ENCODE measurements at regions of chr4 and their contacts with region 1.

Region 1: GRCh38 chr4:26410385-26411293 is 79.6 kb downstream of the CCKAR start:
- DNase-seq: peak; percentile 44
- ATAC-seq: peak; percentile 60; the same call in 2 of the 3 replicates
- H3K4me3 ChIP-seq: no peak overlapping the region
- H3K27ac ChIP-seq: no peak overlapping the region
- H3K4me1 ChIP-seq: 0 out of 2 replicates have a peak, but pooled peaks cover 6% of the 10 kb centered on the region
- H3K27me3 ChIP-seq: no peaks in the 10 kb centered on the region
- CTCF ChIP-seq: peak; percentile 65
- EP300 ChIP-seq: no peak
- POLR2A ChIP-seq: no peak
- RAD21 ChIP-seq: 0 out of 2 replicates have a peak, but pooled peaks have one; percentile 25

Region 2: GRCh38 chr4:25993395-25994185 is 417.0 kb before region 1 on chr4:
- CTCF ChIA-PET with region 1: interaction called, 10 read pairs
- POLR2A ChIA-PET with region 1: no interaction called
- in situ Hi-C with region 1: no loop called
- intact Hi-C with region 1: loop called (anchors 1 kb)
- DNase-seq: peak; percentile 35
- ATAC-seq: peak; percentile 91
- H3K4me3 ChIP-seq: no peak overlapping the region
- H3K27ac ChIP-seq: no peak overlapping the region
- H3K4me1 ChIP-seq: no peaks in the 10 kb centered on the region
- H3K27me3 ChIP-seq: no peaks in the 10 kb centered on the region
- CTCF ChIP-seq: peak; percentile 60
- EP300 ChIP-seq: no peak
- POLR2A ChIP-seq: no peak
- RAD21 ChIP-seq: peak; percentile 37; the same call in 1 of the 2 replicates

Region 3: DNA sequence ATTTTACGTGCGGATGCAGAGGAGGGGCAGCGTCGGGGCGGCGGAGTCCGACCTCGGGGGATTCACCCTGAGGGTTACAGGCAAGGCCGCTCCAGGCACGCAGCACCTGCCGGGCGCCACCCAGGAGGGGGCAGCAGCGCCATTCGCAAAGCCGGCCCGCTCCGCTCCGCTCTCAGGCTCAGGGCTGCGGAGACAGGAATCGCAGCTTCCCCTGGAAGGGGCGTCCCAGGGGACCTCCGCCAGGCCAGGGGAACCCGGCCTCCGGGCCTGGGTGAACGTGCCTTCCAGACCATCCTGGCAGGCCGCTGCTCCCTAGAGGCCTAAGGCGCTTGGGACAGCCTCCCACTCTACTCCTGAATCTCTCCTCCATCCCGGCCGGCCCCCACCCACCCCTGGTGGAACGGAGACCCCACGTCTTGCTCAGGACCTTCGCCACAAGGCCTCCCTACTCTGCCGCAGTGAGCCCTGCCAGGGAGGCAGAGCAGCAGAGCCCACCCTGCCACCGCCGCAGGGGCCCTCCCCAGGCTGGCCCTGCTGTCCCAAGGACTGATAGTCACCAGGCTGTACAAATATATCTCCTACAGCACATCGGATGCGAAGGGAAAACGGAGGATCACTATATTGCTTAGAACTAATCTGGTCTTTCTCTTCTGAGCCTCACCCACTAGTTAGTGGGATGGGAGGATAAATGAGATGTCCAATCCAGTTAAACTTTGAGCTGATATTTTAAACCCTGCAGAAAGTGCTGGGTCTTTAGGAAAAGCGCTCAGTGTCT is 381.7 kb before region 1 on chr4:
- CTCF ChIA-PET with region 1: interaction called, 6 read pairs
- POLR2A ChIA-PET with region 1: no interaction called
- in situ Hi-C with region 1: loop called (anchors 25 kb)
- intact Hi-C with region 1: loop called (anchors 1 kb)
- DNase-seq: peak; percentile 27
- ATAC-seq: peak; percentile 98
- H3K4me3 ChIP-seq: no peak overlapping the region; a peak in 1 of 6 replicates
- H3K27ac ChIP-seq: no peak overlapping the region
- H3K4me1 ChIP-seq: peaks cover 36% of the 10 kb centered on the region
- H3K27me3 ChIP-seq: peaks cover 5 to 50% of the 10 kb centered on the region in 2 experiments
- CTCF ChIP-seq: peak; percentile 94
- EP300 ChIP-seq: no peak
- POLR2A ChIP-seq: no peak
- RAD21 ChIP-seq: peak; percentile 95

Region 4: DNA sequence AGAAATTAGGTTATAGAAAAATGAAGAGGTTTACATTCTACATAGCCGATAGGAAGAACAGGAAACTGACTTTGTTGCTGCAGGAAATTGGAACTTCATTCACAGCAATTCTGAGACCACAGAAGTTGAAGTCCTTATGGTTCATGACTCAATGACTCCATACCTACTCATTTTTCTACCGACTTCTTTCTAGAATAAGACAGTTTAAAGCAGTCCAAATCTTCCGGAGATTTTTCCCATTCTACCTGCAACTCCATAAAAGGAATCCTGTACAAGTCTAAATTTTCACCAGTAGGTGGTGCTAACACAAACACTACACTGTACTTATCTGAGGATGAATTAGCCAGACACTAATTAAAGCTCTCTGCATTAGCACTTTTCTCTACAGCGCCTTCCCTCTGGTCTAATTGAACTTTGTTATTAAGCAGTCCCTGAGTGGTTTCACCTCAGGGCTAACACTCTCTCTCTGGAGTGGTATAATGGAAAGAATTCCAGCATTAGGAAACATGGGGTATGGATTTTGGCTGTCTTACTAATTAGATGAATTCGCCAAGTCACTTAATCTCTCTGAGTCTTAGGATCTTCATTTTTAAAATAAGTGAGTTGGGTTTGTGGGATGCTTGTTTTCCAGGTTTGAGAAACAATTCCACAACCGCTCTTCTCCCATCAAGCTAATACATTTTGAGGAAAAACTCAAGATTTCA is 328.7 kb before region 1 on chr4:
- CTCF ChIA-PET with region 1: interaction called, 11 read pairs
- POLR2A ChIA-PET with region 1: no interaction called
- in situ Hi-C with region 1: no loop called
- intact Hi-C with region 1: loop called (anchors 1 kb)
- DNase-seq: peak; percentile 32
- ATAC-seq: peak; percentile 85
- H3K4me3 ChIP-seq: no peak overlapping the region
- H3K27ac ChIP-seq: no peak overlapping the region
- H3K4me1 ChIP-seq: no peaks in the 10 kb centered on the region
- H3K27me3 ChIP-seq: peaks cover 2 to 6% of the 10 kb centered on the region in 2 experiments; a peak in 1 of 5 replicates
- CTCF ChIP-seq: peak; percentile 68
- EP300 ChIP-seq: no peak
- POLR2A ChIP-seq: no peak
- RAD21 ChIP-seq: 0 out of 2 replicates have a peak, but pooled peaks have one; percentile 24

Region 5: GRCh38 chr4:26325191-26325590 is 85.4 kb before region 1 on chr4:
- CTCF ChIA-PET with region 1: interaction called, 22 read pairs
- POLR2A ChIA-PET with region 1: no interaction called
- in situ Hi-C with region 1: loop called (anchors 5 kb)
- intact Hi-C with region 1: loop called (anchors 1 kb)
- DNase-seq: peak; percentile 42
- ATAC-seq: no peak
- H3K4me3 ChIP-seq: no peak overlapping the region
- H3K27ac ChIP-seq: no peak overlapping the region
- H3K4me1 ChIP-seq: peaks cover 22% of the 10 kb centered on the region
- H3K27me3 ChIP-seq: no peaks in the 10 kb centered on the region; a peak in 1 of 5 replicates
- CTCF ChIP-seq: peak; percentile 46
- EP300 ChIP-seq: no peak
- POLR2A ChIP-seq: no peak
- RAD21 ChIP-seq: no peak

Region 6: DNA sequence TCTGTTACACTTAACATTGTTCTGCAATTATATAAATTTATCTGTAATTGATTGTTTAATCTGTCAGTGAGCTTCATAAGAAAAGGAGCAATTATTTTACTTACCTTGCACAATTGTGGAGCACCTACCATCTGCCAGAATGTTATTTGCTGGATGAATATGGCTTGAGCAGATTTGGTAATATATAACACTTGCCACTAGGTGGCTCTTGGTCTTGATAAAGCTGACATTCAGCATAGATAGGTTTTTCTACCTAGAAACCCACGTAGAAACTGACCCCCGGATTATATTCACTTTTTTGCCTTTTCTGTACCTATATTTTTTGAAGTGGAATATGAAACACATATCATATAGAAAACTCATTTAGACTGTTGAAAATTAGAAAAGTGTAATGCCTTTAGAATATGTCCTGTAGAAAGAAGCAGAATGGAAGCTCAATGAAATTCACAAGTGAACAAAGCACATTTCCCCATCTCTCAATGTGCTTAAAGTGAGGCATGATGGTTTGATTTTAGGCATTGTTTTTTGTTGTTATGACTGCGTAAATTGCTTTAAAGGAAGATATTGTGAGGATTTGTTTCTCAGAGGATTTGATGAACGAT is 80.4 kb before region 1 on chr4:
- CTCF ChIA-PET with region 1: interaction called, 22 read pairs
- POLR2A ChIA-PET with region 1: no interaction called
- in situ Hi-C with region 1: loop called (anchors 5 kb)
- intact Hi-C with region 1: loop called (anchors 1 kb)
- DNase-seq: peak; percentile 64
- ATAC-seq: peak; percentile 91
- H3K4me3 ChIP-seq: no peak overlapping the region
- H3K27ac ChIP-seq: no peak overlapping the region
- H3K4me1 ChIP-seq: peaks cover 22% of the 10 kb centered on the region
- H3K27me3 ChIP-seq: no peaks in the 10 kb centered on the region
- CTCF ChIP-seq: peak; percentile 68
- EP300 ChIP-seq: no peak
- POLR2A ChIP-seq: no peak
- RAD21 ChIP-seq: no peak

Region 7: GRCh38 chr4:26719954-26720552 is 309.4 kb after region 1 on chr4:
- CTCF ChIA-PET with region 1: interaction called, 4 read pairs
- POLR2A ChIA-PET with region 1: no interaction called
- in situ Hi-C with region 1: no loop called
- intact Hi-C with region 1: loop called (anchors 5 kb)
- DNase-seq: no peak
- ATAC-seq: no peak
- H3K4me3 ChIP-seq: no peak overlapping the region
- H3K27ac ChIP-seq: no peak overlapping the region
- H3K4me1 ChIP-seq: no peaks in the 10 kb centered on the region
- H3K27me3 ChIP-seq: no peaks in the 10 kb centered on the region
- CTCF ChIP-seq: peak; percentile 46
- EP300 ChIP-seq: no peak
- POLR2A ChIP-seq: no peak
- RAD21 ChIP-seq: no peak